Posterior cingulate gyrus (tissue), 11 donors: ENCODE measurements at regions of chr12 and their contacts with region 1.

Region 1: GRCh38 chr12:55188974-55189556 is 31.8 kb upstream of the OR10A7 start:
- DNase-seq: peak in 2 of 10 donors; percentile 35 to 63

Region 2: DNA sequence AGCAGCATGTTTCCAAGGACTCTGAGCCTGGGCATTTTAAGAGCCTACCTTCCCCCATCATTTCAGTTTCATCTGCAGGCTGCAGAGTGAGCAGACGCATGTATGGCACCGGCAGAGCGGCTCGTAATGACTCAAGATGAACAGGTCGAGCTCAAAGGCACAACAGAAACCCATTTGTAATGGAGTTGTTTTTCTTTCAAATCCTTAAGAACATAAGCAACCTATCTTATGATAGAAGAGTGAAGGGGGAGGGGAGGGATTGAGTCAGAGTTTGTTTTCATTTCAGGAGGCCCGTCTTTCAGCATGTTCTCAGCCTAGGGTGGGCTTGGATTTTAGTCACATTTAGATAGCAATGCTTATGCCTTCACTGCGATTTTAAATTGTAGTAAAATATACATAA is 1382.3 kb before region 1 on chr12:
- intact Hi-C with region 1: no loop called
- DNase-seq: no peak

Region 3: GRCh38 chr12:55619354-55620138 is 430.5 kb after region 1 on chr12:
- intact Hi-C with region 1: loop called (anchors 1 kb)
- DNase-seq: peak in 1 of 10 donors; percentile 4